Mammary epithelial cell (primary cell): ENCODE measurements at regions of chr7 and their contacts with region 1.

Region 1: DNA sequence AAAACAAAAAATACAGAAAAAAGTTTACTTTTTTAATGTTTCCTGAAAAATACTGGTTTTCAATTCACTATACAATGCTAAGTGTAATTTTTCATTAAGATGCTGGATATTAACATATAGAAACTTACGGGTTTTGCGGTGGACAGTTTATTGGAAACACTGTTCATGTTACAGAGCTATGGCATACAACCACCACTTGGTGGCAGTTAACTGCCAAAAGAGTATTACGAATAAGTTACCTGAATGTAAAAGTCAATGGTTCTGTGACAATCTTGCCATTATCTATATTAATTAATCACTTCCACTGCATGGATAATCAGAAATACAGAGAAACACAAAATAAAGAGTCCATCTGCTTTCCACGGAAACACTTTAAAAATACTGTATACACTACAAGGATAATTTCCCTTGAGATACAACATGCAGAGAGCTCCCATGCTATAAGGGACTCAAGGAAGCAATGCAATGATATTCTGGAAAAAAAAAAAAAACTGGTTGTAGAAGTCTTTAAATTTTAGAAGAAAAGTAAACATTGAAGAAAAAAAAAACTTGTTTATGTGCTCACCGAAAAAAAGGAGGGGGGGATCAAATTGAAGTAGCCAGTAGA is 97.0 kb downstream of the TPK1 start:
- DNase-seq: peak; percentile 9
- H3K4me3 ChIP-seq: no peak overlapping the region
- H3K27ac ChIP-seq: no peak overlapping the region
- H3K4me1 ChIP-seq: no peaks in the 10 kb centered on the region
- H3K27me3 ChIP-seq: no peaks in the 10 kb centered on the region
- CTCF ChIP-seq: peak; percentile 75 to 78

Region 2: DNA sequence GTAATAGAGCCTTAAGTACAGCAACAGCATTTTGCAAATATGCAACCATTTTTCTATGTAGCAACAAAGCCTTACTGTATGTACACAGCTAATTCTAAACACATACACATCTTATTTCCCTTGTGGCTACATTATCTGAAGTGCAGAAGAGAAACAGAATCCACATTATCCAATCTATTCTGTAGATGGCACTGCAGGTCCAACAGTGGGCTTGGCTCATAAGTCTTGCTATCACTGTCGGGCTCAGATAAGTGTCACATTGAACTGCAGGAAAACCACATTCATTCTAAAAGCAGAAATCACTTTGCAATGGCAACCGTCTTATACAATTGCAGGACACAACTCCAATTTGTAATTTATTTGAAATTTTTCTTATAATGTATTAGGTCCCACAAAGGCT is 225.5 kb before region 1 on chr7:
- CTCF ChIA-PET with region 1: no interaction called
- dilution Hi-C with region 1: no loop called
- in situ Hi-C with region 1: no loop called
- intact Hi-C with region 1: loop called (anchors 10 kb)
- DNase-seq: no peak
- H3K4me3 ChIP-seq: no peak overlapping the region
- H3K27ac ChIP-seq: no peak overlapping the region
- H3K4me1 ChIP-seq: no peaks in the 10 kb centered on the region
- H3K27me3 ChIP-seq: no peaks in the 10 kb centered on the region
- CTCF ChIP-seq: peak; percentile 14 to 40

Region 3: GRCh38 chr7:144796919-144797318 is 58.1 kb after region 1 on chr7:
- CTCF ChIA-PET with region 1: no interaction called
- dilution Hi-C with region 1: loop called (anchors 5 kb)
- in situ Hi-C with region 1: no loop called
- intact Hi-C with region 1: no loop called
- DNase-seq: no peak
- H3K4me3 ChIP-seq: no peak overlapping the region
- H3K27ac ChIP-seq: no peak overlapping the region
- H3K4me1 ChIP-seq: no peaks in the 10 kb centered on the region
- H3K27me3 ChIP-seq: no peaks in the 10 kb centered on the region
- CTCF ChIP-seq: no peak

Region 4: GRCh38 chr7:144854839-144855424 is 116.1 kb after region 1 on chr7:
- CTCF ChIA-PET with region 1: no interaction called
- dilution Hi-C with region 1: no loop called
- in situ Hi-C with region 1: no loop called
- intact Hi-C with region 1: loop called (anchors 5 kb)
- DNase-seq: peak; percentile 4
- H3K4me3 ChIP-seq: no peak overlapping the region
- H3K27ac ChIP-seq: no peak overlapping the region
- H3K4me1 ChIP-seq: peaks cover 3% of the 10 kb centered on the region
- H3K27me3 ChIP-seq: no peaks in the 10 kb centered on the region
- CTCF ChIP-seq: peak; percentile 48 to 66

Region 5: GRCh38 chr7:144936314-144936713 is 197.5 kb after region 1 on chr7:
- CTCF ChIA-PET with region 1: no interaction called
- dilution Hi-C with region 1: no loop called
- in situ Hi-C with region 1: no loop called
- intact Hi-C with region 1: no loop called
- DNase-seq: no peak
- H3K4me3 ChIP-seq: no peak overlapping the region
- H3K27ac ChIP-seq: no peak overlapping the region
- H3K4me1 ChIP-seq: no peaks in the 10 kb centered on the region
- H3K27me3 ChIP-seq: no peaks in the 10 kb centered on the region
- CTCF ChIP-seq: no peak

Region 6: GRCh38 chr7:145036604-145037405 is 298.0 kb after region 1 on chr7:
- CTCF ChIA-PET with region 1: no interaction called
- dilution Hi-C with region 1: no loop called
- in situ Hi-C with region 1: no loop called
- intact Hi-C with region 1: loop called (anchors 2 kb)
- DNase-seq: peak; percentile 25
- H3K4me3 ChIP-seq: no peak overlapping the region
- H3K27ac ChIP-seq: no peak overlapping the region
- H3K4me1 ChIP-seq: no peaks in the 10 kb centered on the region
- H3K27me3 ChIP-seq: no peaks in the 10 kb centered on the region
- CTCF ChIP-seq: peak; percentile 74 to 80